ENCODE measurements at regions of chr3 and their contacts with region 1.

Region 1: GRCh38 chr3:190224863-190225692 is 97.2 kb downstream of the CLDN1 start:
- DNase-seq: peak in 2 of 14 experiments; percentile 24 to 43
- ATAC-seq: no peak
- H3K4me3 ChIP-seq: no peak overlapping the region
- H3K4me3 Mint-ChIP-seq: no peak overlapping the region
- H3K27ac ChIP-seq: no peak overlapping the region
- H3K27ac Mint-ChIP-seq: no peak overlapping the region
- H3K4me1 ChIP-seq: no peaks in the 10 kb centered on the region
- H3K4me1 Mint-ChIP-seq: no peaks in the 10 kb centered on the region
- H3K27me3 ChIP-seq: no peaks in the 10 kb centered on the region
- H3K27me3 Mint-ChIP-seq: peaks cover 4% of the 10 kb centered on the region
- CTCF ChIP-seq: peak; percentile 31

Region 2: GRCh38 chr3:190321789-190322603 is 96.9 kb after region 1 on chr3 and contains the start of gene CLDN1:
- CTCF ChIA-PET with region 1: interaction called, 8 read pairs
- POLR2A ChIA-PET with region 1: interaction called, 3 read pairs
- intact Hi-C with region 1: loop called (anchors 1 kb)
- DNase-seq: peak; percentile 51 to 82 (median 64)
- ATAC-seq: peak; percentile 85
- H3K4me3 ChIP-seq: peak within 1 kb of the TSS; percentile 53
- H3K4me3 Mint-ChIP-seq: peak within 1 kb of the TSS; percentile 71
- H3K27ac ChIP-seq: no peak within 1 kb of the TSS
- H3K27ac Mint-ChIP-seq: no peak within 1 kb of the TSS
- H3K4me1 ChIP-seq: peaks cover 16% of the 10 kb centered on the region
- H3K4me1 Mint-ChIP-seq: peaks cover 16% of the 10 kb centered on the region
- H3K27me3 ChIP-seq: peaks cover 0 to 13% of the 10 kb centered on the region in 2 experiments
- H3K27me3 Mint-ChIP-seq: peaks cover 42% of the 10 kb centered on the region
- CTCF ChIP-seq: peak; percentile 87
- total RNA-seq, gene CLDN1: 0.80 to 0.95 TPM

Region 3: GRCh38 chr3:190384241-190384863 is 159.3 kb after region 1 on chr3:
- CTCF ChIA-PET with region 1: no interaction called
- POLR2A ChIA-PET with region 1: no interaction called
- intact Hi-C with region 1: no loop called
- DNase-seq: peak in 3 of 14 experiments; percentile 2 to 14 (median 4)
- ATAC-seq: no peak
- H3K4me3 ChIP-seq: no peak overlapping the region
- H3K4me3 Mint-ChIP-seq: no peak overlapping the region
- H3K27ac ChIP-seq: no peak overlapping the region
- H3K27ac Mint-ChIP-seq: no peak overlapping the region
- H3K4me1 ChIP-seq: no peaks in the 10 kb centered on the region
- H3K4me1 Mint-ChIP-seq: no peaks in the 10 kb centered on the region
- H3K27me3 ChIP-seq: peaks cover 0 to 3% of the 10 kb centered on the region in 2 experiments
- H3K27me3 Mint-ChIP-seq: peaks cover 4% of the 10 kb centered on the region
- CTCF ChIP-seq: no peak

Region 4: GRCh38 chr3:190424478-190425439 is 199.7 kb after region 1 on chr3:
- CTCF ChIA-PET with region 1: no interaction called
- POLR2A ChIA-PET with region 1: no interaction called
- intact Hi-C with region 1: loop called in 1 of 2 experiments (anchors 1 kb)
- DNase-seq: peak in 6 of 14 experiments; percentile 2 to 66 (median 36)
- ATAC-seq: peak; percentile 55
- H3K4me3 ChIP-seq: no peak overlapping the region
- H3K4me3 Mint-ChIP-seq: peak overlapping the region; percentile 57
- H3K27ac ChIP-seq: no peak overlapping the region
- H3K27ac Mint-ChIP-seq: peak overlapping the region; percentile 73
- H3K4me1 ChIP-seq: peaks cover 3% of the 10 kb centered on the region
- H3K4me1 Mint-ChIP-seq: peaks cover 6% of the 10 kb centered on the region
- H3K27me3 ChIP-seq: no peaks in the 10 kb centered on the region
- H3K27me3 Mint-ChIP-seq: peaks cover 5% of the 10 kb centered on the region
- CTCF ChIP-seq: peak; percentile 67